Caco-2 (cell line): ENCODE measurements at regions of chr12 and their contacts with region 1.

Region 1: DNA sequence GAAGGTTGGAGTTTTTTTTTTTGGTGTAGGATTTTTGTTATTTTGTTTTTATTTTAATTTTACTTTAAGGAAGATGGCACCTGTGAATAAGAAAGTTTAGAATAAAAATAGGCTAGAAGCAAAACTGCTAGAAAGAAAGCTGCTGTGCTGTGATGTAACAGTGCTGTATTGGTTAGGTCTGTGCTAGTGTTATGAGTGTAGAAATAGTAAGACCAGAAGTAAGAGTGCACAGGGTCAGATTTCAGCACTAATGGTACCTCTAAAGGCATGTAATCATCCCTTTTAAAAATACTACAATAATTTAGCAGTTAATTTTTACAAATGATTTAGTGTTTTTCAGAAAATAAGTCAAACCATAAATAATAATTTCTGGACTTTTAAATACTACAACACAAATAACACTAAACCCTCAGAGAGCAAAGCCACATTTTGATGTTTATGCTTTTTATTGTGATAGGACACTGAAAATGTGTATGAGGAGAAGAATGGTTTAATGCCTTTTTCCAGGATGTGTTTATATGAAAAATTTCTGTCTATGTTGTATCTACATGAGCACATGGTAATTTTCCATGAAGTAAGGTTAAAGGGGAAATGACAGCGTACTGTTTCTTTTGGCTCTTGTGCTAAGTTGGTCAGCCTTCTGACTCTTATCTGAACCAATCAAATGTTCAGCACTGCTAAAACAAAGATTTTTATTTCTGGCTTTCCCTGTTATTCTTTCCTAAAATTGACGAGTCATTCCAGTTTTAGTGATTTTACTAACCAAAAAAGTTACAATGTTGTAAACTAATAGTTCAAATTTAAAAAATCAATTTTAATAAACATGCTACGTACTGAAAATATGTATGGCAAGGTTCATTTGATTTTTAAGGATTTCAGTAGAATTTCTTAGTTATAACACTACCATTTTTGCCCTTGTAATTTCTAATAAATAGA is 96.1 kb downstream of the PPHLN1 start:
- DNase-seq: no peak
- H3K4me3 ChIP-seq: no peak overlapping the region
- H3K4me3 Mint-ChIP-seq: no peak overlapping the region
- H3K27ac Mint-ChIP-seq: no peak overlapping the region
- H3K4me1 ChIP-seq: no peaks in the 10 kb centered on the region
- H3K4me1 Mint-ChIP-seq: peaks cover 10% of the 10 kb centered on the region
- H3K27me3 ChIP-seq: no peaks in the 10 kb centered on the region
- H3K27me3 Mint-ChIP-seq: no peaks in the 10 kb centered on the region
- CTCF ChIP-seq: no peak

Region 2: DNA sequence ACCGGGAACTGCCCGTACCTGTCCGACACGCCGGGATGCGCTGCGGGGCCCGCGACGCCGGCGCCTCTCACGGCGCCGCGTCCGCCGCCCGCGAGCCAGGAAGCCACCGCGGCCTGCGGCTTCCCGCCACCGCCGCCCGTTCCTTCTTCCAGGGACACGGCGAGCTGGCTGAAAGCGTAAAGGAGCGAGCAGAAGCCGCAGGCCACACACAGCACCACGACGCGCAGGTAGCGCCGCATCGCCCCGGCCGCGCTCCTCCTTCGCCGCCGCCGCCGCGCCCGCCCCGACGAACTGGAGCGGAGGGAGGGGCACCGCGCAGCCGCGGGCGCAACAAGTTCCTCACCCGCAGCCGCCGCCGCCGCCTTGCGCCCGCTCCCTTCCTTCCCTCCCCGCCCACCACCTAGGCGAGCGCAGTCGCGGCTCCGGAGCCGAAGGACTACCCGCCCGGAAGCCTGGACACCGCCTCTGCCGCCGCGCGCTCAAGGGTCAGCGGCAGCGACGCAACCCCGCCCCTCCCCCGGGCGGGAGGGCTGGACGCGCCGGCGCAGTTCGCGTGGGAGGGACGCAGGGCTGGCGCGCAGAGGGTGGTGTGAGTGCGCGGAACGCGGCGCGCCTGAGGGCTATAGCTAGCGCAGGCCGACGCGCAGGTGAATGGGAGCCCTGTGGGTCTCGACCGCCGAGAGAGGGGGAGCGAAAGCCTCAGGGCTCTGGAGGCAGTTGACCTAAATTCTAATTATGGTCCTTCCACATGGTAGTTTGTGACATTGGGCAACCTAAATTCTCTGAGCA is 277.5 kb before region 1 on chr12 and contains the start of gene GXYLT1:
- CTCF ChIA-PET with region 1: no interaction called
- POLR2A ChIA-PET with region 1: no interaction called
- intact Hi-C with region 1: no loop called
- DNase-seq: peak; percentile 97 to 98
- H3K4me3 ChIP-seq: peak within 1 kb of the TSS; percentile 69
- H3K4me3 Mint-ChIP-seq: peak within 1 kb of the TSS; percentile 82
- H3K27ac Mint-ChIP-seq: peak within 1 kb of the TSS; percentile 84
- H3K4me1 ChIP-seq: peaks cover 31% of the 10 kb centered on the region
- H3K4me1 Mint-ChIP-seq: peaks cover 35% of the 10 kb centered on the region
- H3K27me3 ChIP-seq: no peaks in the 10 kb centered on the region
- H3K27me3 Mint-ChIP-seq: no peaks in the 10 kb centered on the region
- CTCF ChIP-seq: no peak
- total RNA-seq, gene GXYLT1: 25.7 and 28.1 TPM in 2 replicates

Region 3: DNA sequence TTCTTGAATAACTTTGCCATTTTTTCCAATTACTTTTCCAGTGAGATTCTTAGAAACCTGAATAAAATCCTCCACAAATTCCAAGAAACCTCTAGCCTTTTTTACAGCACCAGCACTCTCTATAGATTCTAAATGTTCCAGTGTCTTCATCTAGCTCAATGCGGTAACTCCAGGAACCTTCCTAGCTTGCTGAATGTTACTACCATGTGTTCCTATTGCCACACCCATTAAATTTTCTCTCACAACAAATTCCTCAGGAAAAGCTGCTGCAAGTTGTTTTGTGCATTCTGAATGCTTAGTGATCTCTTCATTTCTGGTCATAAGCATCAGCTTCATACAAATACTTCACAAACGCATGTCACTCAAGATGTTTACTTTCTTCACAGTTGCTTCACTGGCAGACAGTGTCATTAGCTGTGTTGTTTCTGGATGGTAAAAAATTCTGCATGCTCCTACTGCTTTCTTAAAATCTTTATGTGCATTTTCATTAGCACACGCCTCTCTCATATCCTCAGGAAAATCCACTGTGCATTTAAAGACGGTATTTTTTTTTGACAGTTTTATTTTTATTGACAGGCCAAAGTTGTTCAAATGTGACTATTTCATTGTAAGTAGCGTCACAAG is 10.5 kb after region 1 on chr12:
- CTCF ChIA-PET with region 1: no interaction called
- POLR2A ChIA-PET with region 1: no interaction called
- intact Hi-C with region 1: loop called (anchors 1 kb)
- DNase-seq: no peak
- H3K4me3 ChIP-seq: no peak overlapping the region
- H3K4me3 Mint-ChIP-seq: no peak overlapping the region
- H3K27ac Mint-ChIP-seq: no peak overlapping the region
- H3K4me1 ChIP-seq: no peaks in the 10 kb centered on the region
- H3K4me1 Mint-ChIP-seq: no peaks in the 10 kb centered on the region
- H3K27me3 ChIP-seq: no peaks in the 10 kb centered on the region
- H3K27me3 Mint-ChIP-seq: no peaks in the 10 kb centered on the region
- CTCF ChIP-seq: no peak